AG04449 (cell line): ENCODE measurements at regions of chr1 and their contacts with region 1.

Region 1: DNA sequence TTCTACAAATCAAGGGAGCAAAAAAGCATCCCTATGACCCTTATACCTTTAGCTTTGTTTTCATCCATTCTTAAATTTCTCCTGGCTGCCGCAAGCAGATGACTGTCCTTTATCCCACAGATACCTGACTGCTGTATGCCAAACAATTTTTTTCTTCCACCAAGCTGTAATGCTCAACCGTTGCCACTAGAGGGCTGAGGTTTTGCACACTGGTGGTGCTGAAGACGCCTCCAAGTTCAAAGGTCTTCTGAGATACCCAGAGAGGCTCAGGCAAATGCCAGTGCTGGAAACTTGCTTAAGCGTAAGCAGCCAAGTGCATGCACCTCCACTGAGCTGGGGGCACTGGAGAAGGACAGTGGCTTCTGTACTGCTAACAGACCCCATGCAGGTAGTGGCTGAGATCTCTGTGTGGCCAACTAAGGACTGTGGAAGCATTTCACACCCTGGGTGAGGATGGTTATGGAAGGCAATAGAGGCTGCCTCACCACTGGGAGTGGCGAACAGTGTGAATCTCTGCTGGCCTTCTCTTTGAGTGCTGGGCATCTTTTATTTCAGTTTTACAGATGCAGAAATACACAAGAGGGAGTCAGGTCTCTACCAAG is 28.5 kb downstream of the CNIH3 start:
- DNase-seq: no peak
- H3K4me3 ChIP-seq: no peak overlapping the region
- CTCF ChIP-seq: peak; percentile 80

Region 2: DNA sequence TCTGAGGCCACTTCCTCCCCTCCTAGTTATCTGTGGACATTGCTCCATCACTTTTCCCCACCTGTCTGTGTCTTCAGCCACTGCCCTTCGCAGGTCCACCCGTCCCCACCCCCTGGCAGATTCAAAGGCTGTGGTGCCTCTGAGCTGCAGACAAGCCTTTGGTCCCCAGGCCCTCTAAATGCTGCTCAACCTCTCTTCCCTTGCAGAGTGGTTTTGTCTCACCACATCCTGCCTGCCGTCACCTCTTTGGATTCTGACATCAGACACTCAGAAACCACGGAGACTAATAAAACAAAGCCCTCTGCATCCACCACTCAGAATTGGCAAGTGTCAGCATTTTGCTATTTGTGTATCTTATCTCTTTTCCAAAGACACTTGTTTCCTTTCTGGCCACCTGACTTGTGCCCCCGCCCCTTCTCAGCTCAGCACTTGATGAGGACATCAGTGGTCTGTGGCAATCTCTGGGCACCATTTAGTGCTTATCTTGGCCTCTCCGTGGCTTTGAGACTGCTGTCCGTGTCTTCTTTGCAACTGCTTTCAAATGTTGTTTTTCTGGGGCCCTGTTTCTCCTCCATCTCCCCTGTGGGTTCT is 20.8 kb before region 1 on chr1:
- CTCF ChIA-PET with region 1: interaction called, 10 read pairs
- POLR2A ChIA-PET with region 1: no interaction called
- DNase-seq: peak; percentile 58
- H3K4me3 ChIP-seq: no peak overlapping the region; the same call in 1 of the 2 replicates
- CTCF ChIP-seq: no peak

Region 3: DNA sequence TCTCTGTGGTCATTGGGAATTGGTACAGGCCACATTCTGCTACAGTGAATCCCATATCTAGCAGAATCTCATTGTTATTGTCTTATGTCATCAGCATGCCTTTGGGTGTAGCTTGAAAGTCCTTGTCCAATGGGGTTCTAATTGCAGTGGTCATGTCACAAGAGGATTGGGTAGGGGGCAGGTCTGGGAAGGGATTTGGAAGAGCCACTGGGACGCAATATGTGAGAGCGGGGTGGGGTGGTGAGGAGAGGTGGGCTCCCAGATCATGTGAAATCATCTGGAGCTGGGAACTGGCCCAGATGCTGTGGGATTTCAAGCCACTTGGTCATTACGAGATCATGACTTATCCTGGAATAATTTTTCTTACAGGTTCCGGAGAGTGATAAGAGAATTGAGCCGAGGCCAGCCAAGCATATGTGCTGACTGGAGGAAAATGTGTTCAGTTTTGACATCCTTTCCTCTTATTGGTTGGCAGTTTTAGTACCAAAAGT is 12.2 kb before region 1 on chr1:
- CTCF ChIA-PET with region 1: interaction called, 90 read pairs
- POLR2A ChIA-PET with region 1: no interaction called
- DNase-seq: no peak
- H3K4me3 ChIP-seq: no peak overlapping the region
- CTCF ChIP-seq: no peak

Region 4: DNA sequence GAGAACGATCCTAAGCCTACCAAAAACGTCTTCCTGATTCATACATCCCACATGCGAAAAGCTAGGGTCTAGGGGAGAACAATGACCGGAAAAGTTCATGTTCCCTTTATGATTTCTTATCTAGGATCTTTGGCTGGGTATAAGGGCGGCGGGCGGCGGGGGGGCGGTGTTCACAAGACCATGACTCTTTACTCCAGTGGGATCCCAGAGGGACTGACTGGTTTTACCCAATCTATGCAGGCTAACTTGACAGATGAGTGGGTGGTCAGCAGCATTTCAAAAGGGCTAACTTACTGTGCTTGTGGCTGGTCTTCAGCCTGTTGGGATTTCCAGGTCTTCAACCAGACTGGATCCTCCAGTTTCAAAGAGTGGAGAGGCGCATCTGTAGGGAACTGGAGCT is 11.7 kb after region 1 on chr1:
- CTCF ChIA-PET with region 1: interaction called, 37 read pairs
- POLR2A ChIA-PET with region 1: no interaction called
- DNase-seq: no peak
- H3K4me3 ChIP-seq: no peak overlapping the region
- CTCF ChIP-seq: no peak

Region 5: GRCh38 chr1:224668984-224669383 is 24.3 kb after region 1 on chr1:
- CTCF ChIA-PET with region 1: interaction called, 26 read pairs
- POLR2A ChIA-PET with region 1: no interaction called
- DNase-seq: no peak
- H3K4me3 ChIP-seq: no peak overlapping the region
- CTCF ChIP-seq: no peak

Region 6: DNA sequence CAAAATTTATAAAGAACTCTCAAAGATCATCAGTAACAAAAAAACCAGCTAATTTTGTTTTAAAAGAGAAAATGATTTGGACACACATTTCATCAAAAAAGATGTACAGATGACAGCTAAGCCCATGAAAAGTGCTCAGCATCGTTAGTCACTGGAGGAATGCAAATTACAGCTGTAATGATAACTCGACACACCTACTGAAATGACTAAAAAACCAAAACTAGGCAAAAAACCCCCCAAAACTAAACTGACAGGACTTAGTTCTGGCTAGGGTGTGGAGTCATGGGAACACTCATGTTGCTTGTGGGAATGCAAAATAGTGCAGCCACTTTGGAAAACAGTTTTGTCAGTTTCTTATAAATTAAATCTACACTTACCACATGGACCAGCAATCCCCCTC is 30.9 kb after region 1 on chr1:
- CTCF ChIA-PET with region 1: interaction called, 26 read pairs
- POLR2A ChIA-PET with region 1: no interaction called
- DNase-seq: no peak
- H3K4me3 ChIP-seq: no peak overlapping the region
- CTCF ChIP-seq: no peak